ENCODE measurements at regions of chr3 and their contacts with region 1.

Region 1: DNA sequence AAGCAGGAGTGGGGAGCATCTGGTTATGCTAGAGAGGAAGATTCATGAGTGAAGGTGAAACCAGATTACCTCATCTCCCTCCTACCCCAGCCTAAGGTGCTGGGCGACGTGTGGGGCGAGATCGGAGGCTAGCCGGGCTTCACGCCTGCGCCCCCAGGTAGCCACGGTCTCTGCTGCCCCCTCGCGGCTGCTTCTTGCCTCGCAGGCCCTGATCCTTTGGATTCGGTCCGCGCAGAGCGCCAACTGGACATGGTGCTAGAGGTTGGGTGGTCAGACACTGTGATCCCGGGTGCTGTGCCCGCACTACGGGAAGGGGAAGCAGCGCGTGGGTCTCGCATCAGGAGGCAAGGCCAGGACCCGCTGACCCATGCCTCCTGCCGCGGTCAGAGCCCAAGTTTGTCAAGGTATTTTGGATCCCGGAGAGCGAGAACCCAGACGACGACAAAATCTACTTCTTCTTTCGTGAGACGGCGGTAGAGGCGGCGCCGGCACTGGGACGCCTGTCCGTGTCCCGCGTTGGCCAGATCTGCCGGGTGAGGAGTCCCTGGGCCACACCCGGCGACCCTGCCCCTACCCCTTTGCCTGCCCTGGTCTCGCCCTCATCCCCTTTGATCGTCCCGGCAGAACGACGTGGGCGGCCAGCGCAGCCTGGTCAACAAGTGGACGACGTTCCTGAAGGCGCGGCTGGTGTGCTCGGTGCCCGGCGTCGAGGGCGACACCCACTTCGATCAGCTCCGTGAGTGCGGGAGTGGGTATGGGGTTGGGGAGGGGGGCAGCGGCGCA is 4.2 kb downstream of the SEMA3B start:
- DNase-seq: peak; percentile 92
- ATAC-seq: peak; percentile 89
- H3K4me3 Mint-ChIP-seq: peak overlapping the region; percentile 58
- H3K27ac Mint-ChIP-seq: no peak overlapping the region
- H3K4me1 Mint-ChIP-seq: peaks cover 32% of the 10 kb centered on the region
- H3K27me3 Mint-ChIP-seq: peaks cover 54% of the 10 kb centered on the region

Region 2: DNA sequence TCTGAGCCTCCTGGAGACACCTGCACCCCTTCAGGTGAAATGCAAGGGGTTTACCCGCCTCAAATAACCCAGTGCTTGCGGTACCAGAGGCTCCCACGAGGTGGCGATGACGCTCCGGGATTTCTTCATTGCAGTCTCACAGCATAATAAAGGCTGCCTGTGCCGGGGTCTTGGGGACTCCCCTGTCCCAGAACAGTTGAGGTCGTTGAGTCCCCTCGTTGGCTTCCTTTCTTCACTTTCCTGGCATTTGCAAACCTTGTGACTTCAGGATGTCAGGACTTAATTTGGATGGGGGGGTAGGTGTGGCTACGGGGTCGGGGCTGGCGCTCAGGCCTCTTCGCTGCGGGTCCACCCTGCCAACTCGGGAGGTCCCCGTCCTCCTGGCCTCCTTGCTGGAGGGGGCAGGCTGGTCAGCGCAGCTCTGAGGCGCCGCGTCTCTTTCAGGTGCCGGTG is 80.4 kb before region 1 on chr3:
- CTCF ChIA-PET with region 1: interaction called, 58 read pairs
- DNase-seq: peak; percentile 85
- ATAC-seq: peak; percentile 38
- H3K4me3 Mint-ChIP-seq: no peak overlapping the region
- H3K27ac Mint-ChIP-seq: no peak overlapping the region
- H3K4me1 Mint-ChIP-seq: peaks cover 10% of the 10 kb centered on the region
- H3K27me3 Mint-ChIP-seq: peaks cover 25% of the 10 kb centered on the region

Region 3: DNA sequence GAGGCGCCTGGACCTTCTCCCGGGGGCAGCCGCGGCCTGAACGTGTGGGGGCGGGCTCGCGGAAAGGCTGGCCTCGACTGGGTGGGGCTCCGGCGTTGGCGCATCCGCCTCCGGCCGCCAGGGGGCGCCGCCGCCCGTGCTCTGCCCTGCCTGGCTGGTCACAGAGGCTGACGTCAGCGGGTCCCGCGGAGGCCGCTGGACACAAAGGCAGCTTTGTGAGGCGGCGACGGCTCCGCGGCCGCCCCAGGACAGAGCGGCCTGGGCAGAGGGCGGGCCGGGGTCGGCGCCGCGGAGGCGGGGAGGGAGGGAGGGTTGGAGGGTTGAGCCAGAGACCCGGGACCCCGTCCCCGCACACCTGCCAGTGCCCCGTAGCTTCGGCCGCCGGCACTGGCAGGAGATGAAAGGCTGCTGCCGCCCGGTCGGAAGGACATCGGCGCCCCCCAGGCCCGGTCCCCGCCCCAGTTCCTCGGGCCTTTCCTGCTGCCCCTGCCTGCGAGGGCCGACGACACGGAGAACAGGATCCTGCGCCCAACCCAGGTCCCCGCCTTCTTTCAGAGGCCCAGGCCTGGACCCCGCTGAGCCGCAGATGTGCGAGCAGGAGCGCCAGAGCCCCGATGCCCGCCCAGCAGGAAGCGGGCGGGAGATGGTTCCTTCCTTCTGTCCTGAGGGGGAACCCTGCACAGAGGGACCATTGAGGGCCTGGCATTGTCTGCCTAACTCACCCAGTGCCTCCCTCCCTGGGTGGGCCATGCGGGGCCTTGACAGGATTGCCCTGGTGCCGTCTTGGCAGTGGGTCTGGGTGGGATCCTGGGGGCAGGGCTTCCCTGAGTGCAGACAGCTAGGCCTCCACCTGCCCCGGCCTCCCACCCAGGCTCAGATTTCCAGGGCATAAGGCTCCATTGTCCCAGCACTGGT is 12.8 kb before region 1 on chr3:
- CTCF ChIA-PET with region 1: interaction called, 33 read pairs
- DNase-seq: peak; percentile 91
- ATAC-seq: peak; percentile 97
- H3K4me3 Mint-ChIP-seq: peak overlapping the region; percentile 47
- H3K27ac Mint-ChIP-seq: peak overlapping the region; percentile 32
- H3K4me1 Mint-ChIP-seq: peaks cover 7% of the 10 kb centered on the region
- H3K27me3 Mint-ChIP-seq: no peaks in the 10 kb centered on the region

Region 4: GRCh38 chr3:50292159-50293078 is 19.3 kb after region 1 on chr3 and contains the start of gene IFRD2:
- CTCF ChIA-PET with region 1: interaction called, 18 read pairs
- DNase-seq: peak; percentile 98
- ATAC-seq: peak; percentile 98
- H3K4me3 Mint-ChIP-seq: peak within 1 kb of the TSS; percentile 79
- H3K27ac Mint-ChIP-seq: peak within 1 kb of the TSS; percentile 97
- H3K4me1 Mint-ChIP-seq: peaks cover 22% of the 10 kb centered on the region
- H3K27me3 Mint-ChIP-seq: no peaks in the 10 kb centered on the region
- total RNA-seq, gene IFRD2: 74.8 to 103 TPM

Region 5: GRCh38 chr3:50321336-50322114 is 48.4 kb after region 1 on chr3:
- CTCF ChIA-PET with region 1: interaction called, 21 read pairs
- DNase-seq: peak; percentile 90
- ATAC-seq: peak; percentile 76
- H3K4me3 Mint-ChIP-seq: peak overlapping the region; percentile 89
- H3K27ac Mint-ChIP-seq: peak overlapping the region; percentile 93
- H3K4me1 Mint-ChIP-seq: peaks cover 37% of the 10 kb centered on the region
- H3K27me3 Mint-ChIP-seq: no peaks in the 10 kb centered on the region